ENCODE measurements at regions of chr5 and their contacts with region 1.

Region 1: DNA sequence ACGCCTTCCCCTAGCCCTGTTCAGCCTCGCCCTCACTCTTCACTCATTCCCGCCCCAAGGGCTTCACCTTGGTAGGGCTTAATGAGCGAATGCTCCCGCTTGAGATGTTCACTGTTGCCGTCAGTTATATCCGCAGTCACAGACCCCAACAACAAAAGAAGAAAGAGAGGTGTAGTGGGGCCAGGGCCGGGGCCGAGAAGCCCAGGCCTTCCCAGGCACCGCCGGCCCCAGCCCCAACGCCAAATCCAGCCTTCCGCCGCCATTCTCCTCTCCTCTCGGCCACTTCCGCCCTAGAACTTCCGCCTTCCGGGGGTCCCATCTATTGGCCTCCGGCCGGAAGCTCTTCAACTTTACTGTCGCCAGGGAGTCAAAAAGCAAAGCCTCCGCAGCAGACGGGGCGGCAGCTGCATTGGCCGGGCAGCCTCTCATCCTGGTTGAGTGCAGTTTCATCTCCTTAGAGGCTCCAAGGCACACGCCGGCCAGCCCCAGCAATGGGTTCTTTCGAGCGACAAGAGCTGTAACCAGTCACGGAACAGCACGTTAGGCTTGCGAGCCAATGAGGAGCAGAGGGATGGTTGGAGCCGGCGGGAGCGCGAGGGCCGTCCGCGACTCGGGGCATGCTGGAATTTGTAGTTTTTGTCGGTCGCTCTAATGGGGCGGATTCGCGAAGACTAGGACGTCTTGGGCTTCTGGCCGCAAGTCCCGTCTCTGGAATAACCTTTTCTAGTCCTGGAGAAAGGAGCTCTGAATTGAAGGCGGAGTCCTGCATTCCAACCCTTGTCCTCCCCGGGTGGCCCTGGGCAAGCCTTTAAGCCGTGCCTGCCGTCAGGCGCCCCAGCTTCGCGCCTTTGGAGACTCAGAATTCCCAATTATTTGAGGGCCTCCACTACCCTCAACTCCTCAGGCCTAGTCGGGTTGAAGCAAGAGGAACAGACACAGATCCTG is at the start of gene LMAN2:
- DNase-seq: peak; percentile 96
- H3K4me3 Mint-ChIP-seq: peak within 1 kb of the TSS; percentile 95
- H3K27ac Mint-ChIP-seq: peak within 1 kb of the TSS; percentile 100
- H3K4me1 Mint-ChIP-seq: peaks cover 43% of the 10 kb centered on the region
- H3K27me3 Mint-ChIP-seq: no peaks in the 10 kb centered on the region
- total RNA-seq, gene LMAN2: 82.2 to 83.9 TPM

Region 2: GRCh38 chr5:177086924-177087706 is 264.5 kb before region 1 on chr5:
- CTCF ChIA-PET with region 1: no interaction called
- intact Hi-C with region 1: no loop called
- DNase-seq: peak; percentile 63
- H3K4me3 Mint-ChIP-seq: peak overlapping the region; percentile 33
- H3K27ac Mint-ChIP-seq: no peak overlapping the region
- H3K4me1 Mint-ChIP-seq: peaks cover 4% of the 10 kb centered on the region
- H3K27me3 Mint-ChIP-seq: peaks cover 5% of the 10 kb centered on the region

Region 3: DNA sequence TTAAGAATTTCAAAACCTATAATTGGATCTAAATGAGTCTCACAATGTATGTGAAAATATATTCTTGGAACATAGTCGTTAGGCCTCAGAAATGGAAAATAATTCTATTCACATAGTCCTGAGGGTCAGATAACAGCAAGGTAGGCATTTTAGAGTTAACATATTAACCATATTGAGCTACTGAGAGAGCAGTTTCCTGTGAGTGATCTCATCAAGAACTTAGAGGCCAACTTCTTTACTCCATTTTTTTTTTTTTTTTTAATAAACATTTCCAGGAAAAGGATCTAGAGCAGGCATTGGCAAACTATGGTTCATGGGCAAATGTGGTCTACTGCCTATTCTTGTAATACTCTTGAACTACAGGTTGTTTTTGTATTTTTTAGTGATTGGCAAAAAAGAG is 74.8 kb before region 1 on chr5:
- CTCF ChIA-PET with region 1: no interaction called
- intact Hi-C with region 1: no loop called
- DNase-seq: no peak
- H3K4me3 Mint-ChIP-seq: no peak overlapping the region
- H3K27ac Mint-ChIP-seq: peak overlapping the region; percentile 20
- H3K4me1 Mint-ChIP-seq: peaks cover 6% of the 10 kb centered on the region
- H3K27me3 Mint-ChIP-seq: no peaks in the 10 kb centered on the region

Region 4: GRCh38 chr5:177311723-177312648 is 39.7 kb before region 1 on chr5 and contains the start of gene MXD3:
- CTCF ChIA-PET with region 1: interaction called, 7 read pairs
- intact Hi-C with region 1: loop called (anchors 2 kb)
- DNase-seq: peak; percentile 99
- H3K4me3 Mint-ChIP-seq: peak within 1 kb of the TSS; percentile 97
- H3K27ac Mint-ChIP-seq: peak within 1 kb of the TSS; percentile 82
- H3K4me1 Mint-ChIP-seq: peaks cover 20% of the 10 kb centered on the region
- H3K27me3 Mint-ChIP-seq: peaks cover 3% of the 10 kb centered on the region
- total RNA-seq, gene MXD3: 45.0 to 51.7 TPM

Measured in activated naive CD4-positive, alpha-beta T cell treated with anti-CD3 and anti-CD28 coated beads for 36 hours (primary cell).